ENCODE measurements at regions of chr1 and their contacts with region 1.

Region 1: DNA sequence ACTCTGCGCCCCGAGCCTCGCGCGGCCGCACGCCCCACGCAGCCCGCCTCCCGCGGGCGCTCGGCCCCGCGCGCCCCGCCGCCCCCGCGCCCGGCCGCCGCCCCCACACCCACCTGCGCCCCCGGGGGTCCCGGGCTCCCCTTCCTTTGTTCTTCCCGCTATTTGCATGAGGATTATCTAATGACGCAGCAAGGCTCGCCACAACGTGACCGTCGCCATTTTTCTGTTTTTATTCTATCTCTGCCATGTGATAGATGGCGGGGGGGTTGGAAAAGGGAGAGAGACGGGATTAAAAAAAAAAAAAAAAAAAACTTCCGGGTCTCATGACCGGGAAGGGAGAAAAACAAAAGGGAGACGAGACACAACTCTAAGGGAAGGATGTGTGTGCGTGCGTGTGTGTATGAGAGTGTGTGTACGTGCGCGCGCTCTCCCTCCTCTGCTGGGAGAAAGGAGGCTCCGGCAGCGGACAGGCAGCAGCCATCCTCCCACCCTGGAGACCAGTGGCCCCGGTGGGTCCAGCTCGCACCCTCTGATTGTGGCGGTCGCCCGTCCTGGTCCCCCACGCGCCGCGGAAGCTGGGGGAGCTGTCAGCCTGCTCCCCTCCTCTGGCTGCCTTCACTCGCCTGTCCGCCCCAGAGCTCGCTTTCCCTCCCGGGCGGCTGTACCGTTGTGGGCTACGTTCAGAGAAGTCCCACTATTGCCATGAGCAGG is 80.4 kb upstream of the AK4 start:
- DNase-seq: peak; percentile 72 to 85 (median 81)
- ATAC-seq: peak; percentile 45 to 63 (median 58)
- H3K4me3 ChIP-seq: peak overlapping the region; percentile 71 to 98 (median 88)
- H3K27ac ChIP-seq: peak overlapping the region; percentile 95 to 100 (median 99)
- H3K4me1 ChIP-seq: peaks cover 0 to 43% (median 31%) of the 10 kb centered on the region in 12 donors
- H3K27me3 ChIP-seq: no peaks in the 10 kb centered on the region
- CTCF ChIP-seq: no peak
- POLR2A ChIP-seq: peak in 1 of 2 donors; percentile 65

Region 2: GRCh38 chr1:64864018-64864940 is 203.4 kb before region 1 on chr1:
- intact Hi-C with region 1: loop called in 3 of 10 experiments (anchors 5 to 10 kb)
- DNase-seq: peak; percentile 63 to 88 (median 77)
- ATAC-seq: peak; percentile 45 to 94 (median 85)
- H3K4me3 ChIP-seq: no peak overlapping the region
- H3K27ac ChIP-seq: peak overlapping the region in 9 of 12 donors; percentile 17 to 85 (median 39)
- H3K4me1 ChIP-seq: peaks cover 0 to 28% (median 5%) of the 10 kb centered on the region in 12 donors
- H3K27me3 ChIP-seq: no peaks in the 10 kb centered on the region
- CTCF ChIP-seq: no peak
- POLR2A ChIP-seq: no peak

Region 3: DNA sequence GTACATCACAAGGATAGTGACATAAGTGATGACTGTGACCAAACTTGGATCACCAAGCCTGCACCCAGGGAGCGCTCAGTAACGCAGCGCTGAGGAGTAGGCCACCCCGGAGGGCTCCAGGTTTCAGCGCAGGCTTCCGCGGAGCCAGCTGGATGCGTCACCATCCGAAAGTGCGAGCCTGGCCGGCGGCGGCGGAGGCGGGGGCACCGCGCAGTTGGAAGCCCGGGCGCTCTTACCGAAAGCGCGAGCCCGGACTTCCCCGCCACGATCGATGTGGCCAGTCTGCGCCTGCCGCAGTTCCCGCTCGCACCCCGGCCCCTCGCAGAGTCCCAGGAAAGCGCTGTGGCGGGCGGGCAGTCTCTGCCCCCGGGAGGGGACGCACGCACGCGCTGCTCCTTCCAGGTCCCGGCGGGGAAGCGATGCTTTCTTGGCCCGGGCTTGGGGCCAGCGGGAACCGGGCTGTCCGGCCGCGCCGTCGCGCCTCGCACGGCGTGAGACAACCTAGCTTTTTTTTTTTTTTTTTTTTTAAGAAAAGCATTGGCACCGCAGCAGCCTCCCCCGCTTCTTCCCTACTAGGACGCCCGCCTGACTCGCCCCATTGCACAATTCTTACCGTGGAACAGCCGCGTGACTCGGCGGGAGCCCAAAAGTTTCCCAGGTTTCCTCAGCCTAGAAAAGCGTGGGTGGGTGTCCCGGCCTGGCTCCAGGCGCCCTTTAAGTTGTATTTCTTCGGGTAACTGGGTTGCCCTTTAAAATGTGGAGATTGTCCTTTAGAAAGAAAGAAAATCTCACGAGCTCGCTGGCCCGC is 64.9 kb before region 1 on chr1:
- intact Hi-C with region 1: loop called in 4 of 10 experiments (anchors 2 to 5 kb)
- DNase-seq: peak; percentile 79 to 91 (median 88)
- ATAC-seq: peak; percentile 56 to 93 (median 86)
- H3K4me3 ChIP-seq: peak overlapping the region; percentile 27 to 82 (median 67)
- H3K27ac ChIP-seq: peak overlapping the region; percentile 78 to 98 (median 92)
- H3K4me1 ChIP-seq: peaks cover 4 to 31% (median 16%) of the 10 kb centered on the region in 12 donors
- H3K27me3 ChIP-seq: no peaks in the 10 kb centered on the region
- CTCF ChIP-seq: peak in 1 of 12 donors; percentile 5
- POLR2A ChIP-seq: peak in 1 of 2 donors; percentile 42

Region 4: DNA sequence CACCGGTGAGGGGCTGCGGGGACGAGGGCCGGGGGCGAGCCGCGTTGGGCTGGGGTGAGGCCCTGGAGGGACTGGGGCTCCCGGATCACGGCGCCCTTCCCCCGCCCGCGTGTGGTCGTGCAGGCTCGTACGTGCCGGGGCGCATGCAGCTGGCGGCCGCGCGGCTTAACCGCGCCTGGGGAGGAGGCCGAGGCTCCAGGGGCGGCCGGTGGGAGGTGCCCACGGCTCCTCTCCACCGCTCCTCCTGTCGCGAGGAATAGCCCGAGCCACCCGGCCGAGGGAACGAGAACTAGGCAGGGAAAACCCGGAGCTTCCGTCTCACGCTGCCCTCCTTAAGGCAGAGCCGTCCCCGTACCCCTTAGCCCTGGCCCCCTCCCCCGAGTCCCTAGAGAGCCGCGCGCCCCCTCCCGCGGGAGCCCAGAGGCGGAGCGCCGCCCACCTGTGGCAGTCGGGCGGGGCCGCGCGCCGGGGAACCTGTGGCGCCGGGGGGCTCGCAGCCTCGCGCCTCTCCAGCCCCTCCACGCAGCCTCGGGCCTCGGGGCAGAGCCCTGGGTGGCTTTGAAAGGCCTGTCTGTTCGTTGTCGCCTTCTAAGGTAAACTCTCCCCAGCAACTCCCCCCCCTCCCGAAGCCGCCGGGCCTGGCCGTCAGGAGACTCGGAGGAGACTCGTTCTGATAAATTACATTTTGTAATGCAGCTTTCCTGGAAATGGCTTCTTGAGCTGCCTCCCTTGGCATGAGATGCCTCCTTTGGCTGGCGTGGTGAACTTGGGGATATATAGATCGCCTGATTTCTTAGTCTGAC is 81.1 kb after region 1 on chr1:
- intact Hi-C with region 1: loop called in 9 of 10 experiments (anchors 2 to 10 kb)
- DNase-seq: peak; percentile 41 to 80 (median 53)
- ATAC-seq: peak; percentile 31 to 79 (median 72)
- H3K4me3 ChIP-seq: peak overlapping the region; percentile 70 to 95 (median 90)
- H3K27ac ChIP-seq: peak overlapping the region; percentile 83 to 96 (median 92)
- H3K4me1 ChIP-seq: peaks cover 4 to 29% (median 12%) of the 10 kb centered on the region in 12 donors
- H3K27me3 ChIP-seq: no peaks in the 10 kb centered on the region
- CTCF ChIP-seq: no peak
- POLR2A ChIP-seq: no peak

Region 5: DNA sequence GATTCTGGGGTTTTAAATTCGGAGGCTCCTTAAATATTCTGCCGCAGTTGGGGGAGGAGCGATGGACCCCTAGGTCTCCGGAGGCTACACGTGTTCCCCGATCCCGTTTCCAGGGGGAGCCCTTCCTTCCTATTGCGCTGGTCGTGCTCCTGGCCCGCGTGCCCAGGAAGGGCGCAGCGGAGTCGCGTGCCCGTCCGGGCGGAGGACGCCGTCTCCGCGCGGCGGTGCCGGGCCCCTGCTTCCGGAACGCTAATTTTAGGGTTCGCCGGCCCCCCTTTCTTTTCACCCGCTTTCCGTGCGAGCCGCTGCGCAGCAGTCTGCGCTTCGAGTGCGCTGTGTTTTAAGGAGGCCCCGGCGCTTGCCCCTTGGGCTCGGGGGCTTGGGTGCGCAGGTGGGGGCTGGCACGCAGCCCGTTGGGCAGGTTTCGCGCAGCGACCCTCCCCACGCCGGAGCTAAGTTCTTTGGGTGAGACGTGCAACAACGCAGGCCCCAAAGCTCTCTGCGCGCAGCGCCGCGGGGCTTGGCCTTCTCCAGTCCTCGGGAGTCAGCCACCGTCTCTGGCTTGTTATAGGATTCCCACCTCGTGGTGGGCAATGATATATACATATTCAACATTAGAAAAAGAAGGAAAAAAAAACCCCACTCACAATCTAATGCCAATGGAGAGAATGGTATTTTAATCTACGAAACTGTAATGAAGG is 198.2 kb after region 1 on chr1:
- intact Hi-C with region 1: no loop called
- DNase-seq: peak; percentile 43 to 66 (median 55)
- ATAC-seq: peak; percentile 75 to 96 (median 93)
- H3K4me3 ChIP-seq: peak overlapping the region; percentile 39 to 74 (median 61)
- H3K27ac ChIP-seq: peak overlapping the region in 10 of 12 donors; percentile 22 to 78 (median 58)
- H3K4me1 ChIP-seq: peaks cover 0 to 23% (median 11%) of the 10 kb centered on the region in 12 donors
- H3K27me3 ChIP-seq: peaks cover 0 to 20% (median 0%) of the 10 kb centered on the region in 9 donors
- CTCF ChIP-seq: peak in 11 of 12 donors; percentile 8 to 52 (median 27)
- POLR2A ChIP-seq: no peak